ENCODE measurements at regions of chr17 and their contacts with region 1.

Region 1: DNA sequence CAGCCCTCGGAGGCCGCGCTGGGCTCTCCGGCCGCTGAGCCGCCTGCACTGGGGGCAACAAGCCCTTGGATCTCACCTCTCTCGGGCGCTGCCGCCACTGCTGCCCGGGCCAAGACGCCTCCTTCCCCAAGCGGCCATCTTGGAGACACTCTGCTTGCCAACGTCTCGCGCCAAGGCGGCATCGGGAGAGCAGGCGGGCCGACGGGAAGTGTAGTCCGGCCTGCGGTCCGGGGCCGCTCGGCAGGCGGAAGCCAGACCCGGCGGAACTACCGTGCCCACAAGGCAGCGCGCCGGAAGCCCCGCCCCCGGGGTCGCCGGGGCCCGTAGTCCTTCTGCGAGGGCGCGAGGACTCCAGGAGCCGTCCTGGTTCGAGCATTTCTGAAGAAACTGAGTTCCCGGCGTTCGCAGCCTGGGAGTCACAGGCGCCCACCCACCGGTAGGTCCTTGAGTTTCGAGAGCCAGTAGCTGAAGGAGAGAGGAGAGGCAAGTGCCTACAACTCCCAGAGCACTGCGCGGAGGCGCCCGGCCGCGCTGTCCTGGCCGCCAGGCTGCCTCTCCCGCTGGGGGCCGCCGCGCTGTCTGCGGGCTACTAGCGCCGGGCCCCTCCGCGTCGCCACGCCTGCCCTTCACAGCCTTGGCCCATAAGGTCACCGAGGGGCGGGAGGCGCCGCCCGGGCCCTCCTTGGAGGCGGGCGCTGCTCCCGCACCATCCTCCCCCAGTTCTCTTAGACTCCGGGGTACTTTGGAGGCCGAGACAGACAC is at the start of gene TMEM11:
- DNase-seq: peak; percentile 97
- H3K4me3 ChIP-seq: peak within 1 kb of the TSS; percentile 73 to 96 (median 96)
- H3K27ac ChIP-seq: peak within 1 kb of the TSS; percentile 77
- H3K4me1 ChIP-seq: peaks cover 20% of the 10 kb centered on the region
- H3K27me3 ChIP-seq: no peaks in the 10 kb centered on the region
- CTCF ChIP-seq: peak in 1 of 2 donors; percentile 5
- POLR2A ChIP-seq: peak; percentile 58
- total RNA-seq, gene TMEM11: 27.4 and 28.8 TPM in 2 replicates

Region 2: GRCh38 chr17:20797292-20797691 is 416.9 kb before region 1 on chr17:
- CTCF ChIA-PET with region 1: no interaction called
- POLR2A ChIA-PET with region 1: no interaction called
- dilution Hi-C with region 1: no loop called
- intact Hi-C with region 1: no loop called
- DNase-seq: no peak
- H3K4me3 ChIP-seq: no peak overlapping the region
- H3K27ac ChIP-seq: no peak overlapping the region
- H3K4me1 ChIP-seq: no peaks in the 10 kb centered on the region
- H3K27me3 ChIP-seq: no peaks in the 10 kb centered on the region
- CTCF ChIP-seq: no peak
- POLR2A ChIP-seq: no peak

Region 3: GRCh38 chr17:21146362-21147015 is 67.7 kb before region 1 on chr17:
- CTCF ChIA-PET with region 1: no interaction called
- POLR2A ChIA-PET with region 1: no interaction called
- dilution Hi-C with region 1: no loop called
- intact Hi-C with region 1: no loop called
- DNase-seq: no peak
- H3K4me3 ChIP-seq: no peak overlapping the region
- H3K27ac ChIP-seq: no peak overlapping the region
- H3K4me1 ChIP-seq: no peaks in the 10 kb centered on the region
- H3K27me3 ChIP-seq: no peaks in the 10 kb centered on the region
- CTCF ChIP-seq: no peak
- POLR2A ChIP-seq: no peak

Region 4: GRCh38 chr17:21161498-21162393 is 52.5 kb before region 1 on chr17:
- CTCF ChIA-PET with region 1: no interaction called
- POLR2A ChIA-PET with region 1: no interaction called
- dilution Hi-C with region 1: no loop called
- intact Hi-C with region 1: loop called (anchors 10 kb)
- DNase-seq: peak; percentile 35
- H3K4me3 ChIP-seq: no peak overlapping the region
- H3K27ac ChIP-seq: no peak overlapping the region
- H3K4me1 ChIP-seq: peaks cover 18% of the 10 kb centered on the region
- H3K27me3 ChIP-seq: no peaks in the 10 kb centered on the region
- CTCF ChIP-seq: no peak
- POLR2A ChIP-seq: no peak

Region 5: DNA sequence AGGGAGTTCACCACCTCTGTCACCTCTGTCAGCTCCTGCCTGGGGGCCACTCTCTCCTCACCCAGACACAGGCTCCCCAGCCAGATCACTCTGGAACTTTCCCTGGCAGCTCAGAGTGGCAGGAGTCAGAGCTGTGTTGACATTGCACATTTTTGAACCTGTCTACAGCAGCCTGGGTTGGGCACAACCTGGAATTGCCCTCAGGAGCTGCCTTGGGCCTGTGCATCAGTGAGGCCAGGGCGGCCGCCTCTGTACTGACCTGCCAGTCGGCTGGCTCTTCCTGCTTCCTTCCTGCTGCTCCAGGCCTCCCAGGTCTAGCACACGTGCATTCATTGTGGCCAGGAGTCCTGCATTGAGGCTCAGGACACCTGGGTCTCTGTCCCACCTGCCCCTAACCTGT is 13.9 kb after region 1 on chr17:
- CTCF ChIA-PET with region 1: no interaction called
- POLR2A ChIA-PET with region 1: no interaction called
- dilution Hi-C with region 1: no loop called
- intact Hi-C with region 1: no loop called
- DNase-seq: no peak
- H3K4me3 ChIP-seq: no peak overlapping the region
- H3K27ac ChIP-seq: no peak overlapping the region
- H3K4me1 ChIP-seq: no peaks in the 10 kb centered on the region
- H3K27me3 ChIP-seq: no peaks in the 10 kb centered on the region
- CTCF ChIP-seq: no peak
- POLR2A ChIP-seq: no peak

Region 6: GRCh38 chr17:21252796-21253645 is 38.8 kb after region 1 on chr17 and contains the start of gene NATD1:
- CTCF ChIA-PET with region 1: no interaction called
- POLR2A ChIA-PET with region 1: no interaction called
- dilution Hi-C with region 1: no loop called
- intact Hi-C with region 1: loop called (anchors 1 kb)
- DNase-seq: peak; percentile 80
- H3K4me3 ChIP-seq: peak within 1 kb of the TSS; percentile 14 to 61 (median 40)
- H3K27ac ChIP-seq: no peak within 1 kb of the TSS
- H3K4me1 ChIP-seq: peaks cover 8% of the 10 kb centered on the region
- H3K27me3 ChIP-seq: no peaks in the 10 kb centered on the region
- CTCF ChIP-seq: no peak
- POLR2A ChIP-seq: no peak
- total RNA-seq, gene NATD1: 7.2 and 8.1 TPM in 2 replicates

Region 7: GRCh38 chr17:21295036-21295952 is 81.1 kb after region 1 on chr17:
- CTCF ChIA-PET with region 1: no interaction called
- POLR2A ChIA-PET with region 1: no interaction called
- dilution Hi-C with region 1: no loop called
- intact Hi-C with region 1: no loop called
- DNase-seq: peak; percentile 3
- H3K4me3 ChIP-seq: no peak overlapping the region
- H3K27ac ChIP-seq: no peak overlapping the region
- H3K4me1 ChIP-seq: no peaks in the 10 kb centered on the region
- H3K27me3 ChIP-seq: no peaks in the 10 kb centered on the region
- CTCF ChIP-seq: no peak
- POLR2A ChIP-seq: no peak

Measured in endothelial cell of umbilical vein (primary cell).